Activated CD8-positive, alpha-beta T cell treated with anti-CD3 and anti-CD28 coated beads, Interleukin-2, amount 10 ng/mL, durations not matched to agents 7 days and 5 days (primary cell): ENCODE measurements at regions of chr3 and their contacts with region 1.

Region 1: GRCh38 chr3:51995346-51996163 is at the start of gene RPL29:
- DNase-seq: peak; percentile 95
- ATAC-seq: peak; percentile 94
- H3K4me3 Mint-ChIP-seq: peak within 1 kb of the TSS; percentile 100
- H3K27ac Mint-ChIP-seq: peak within 1 kb of the TSS; percentile 100
- H3K4me1 Mint-ChIP-seq: peaks cover 47% of the 10 kb centered on the region
- H3K27me3 Mint-ChIP-seq: peaks cover 10% of the 10 kb centered on the region
- total RNA-seq, gene RPL29: 1,199 to 1,266 TPM

Region 2: GRCh38 chr3:51974963-51975851 is 20.3 kb before region 1 on chr3 and contains the start of gene ABHD14A:
- CTCF ChIA-PET with region 1: interaction called, 11 read pairs
- POLR2A ChIA-PET with region 1: interaction called, 7 read pairs
- DNase-seq: peak; percentile 73
- ATAC-seq: peak; percentile 81
- H3K4me3 Mint-ChIP-seq: peak within 1 kb of the TSS; percentile 98
- H3K27ac Mint-ChIP-seq: peak within 1 kb of the TSS; percentile 93
- H3K4me1 Mint-ChIP-seq: peaks cover 50% of the 10 kb centered on the region
- H3K27me3 Mint-ChIP-seq: no peaks in the 10 kb centered on the region
- total RNA-seq, gene ABHD14A: 10.5 to 11.7 TPM

Region 3: DNA sequence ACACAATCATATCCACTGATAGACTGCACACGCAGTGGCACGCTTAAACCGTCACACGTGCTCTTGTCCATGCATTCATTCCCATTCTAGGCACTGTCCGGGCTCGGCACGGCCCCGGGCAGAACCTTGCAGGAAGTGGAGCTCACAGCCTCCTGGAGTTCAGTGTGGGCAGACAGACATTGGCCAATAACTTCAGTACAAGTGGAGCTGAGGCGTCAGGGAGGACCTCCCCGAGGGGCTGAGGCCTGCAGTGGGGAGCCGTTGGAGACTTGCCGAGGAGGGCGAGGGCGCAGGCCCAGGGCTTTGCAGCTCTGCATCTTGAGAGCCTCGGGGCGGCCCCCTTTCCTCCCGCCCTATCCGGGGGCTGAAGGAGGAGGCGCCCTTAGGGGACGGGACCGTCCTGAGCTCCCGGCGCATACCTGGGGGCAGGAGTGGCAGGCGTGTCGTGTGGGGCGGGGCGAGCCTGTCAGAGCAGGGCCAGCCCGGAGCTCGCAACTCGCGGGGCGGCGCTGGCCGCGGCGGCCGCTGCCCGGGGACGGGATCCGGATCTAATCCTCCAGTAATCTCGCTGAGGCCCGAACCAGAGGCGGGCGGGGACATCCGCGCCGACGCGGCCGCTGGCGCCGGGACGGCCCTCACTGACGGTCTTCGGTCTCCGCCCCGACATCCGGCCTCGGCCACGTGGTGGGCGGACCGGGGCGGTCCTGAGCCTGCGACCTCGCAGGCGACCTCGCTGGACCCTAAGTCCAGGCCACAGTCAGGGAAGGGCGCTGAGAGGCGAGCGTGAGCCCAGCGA is 12.6 kb before region 1 on chr3 and contains the start of gene ACY1:
- CTCF ChIA-PET with region 1: interaction called, 36 read pairs
- POLR2A ChIA-PET with region 1: interaction called, 65 read pairs
- DNase-seq: peak; percentile 78
- ATAC-seq: peak; percentile 85
- H3K4me3 Mint-ChIP-seq: peak within 1 kb of the TSS; percentile 96
- H3K27ac Mint-ChIP-seq: peak within 1 kb of the TSS; percentile 93
- H3K4me1 Mint-ChIP-seq: peaks cover 28% of the 10 kb centered on the region
- H3K27me3 Mint-ChIP-seq: no peaks in the 10 kb centered on the region
- total RNA-seq, gene ACY1: 17.4 to 21.2 TPM